Activated CD8-positive, alpha-beta T cell treated with anti-CD3 and anti-CD28 coated beads for 36 hours (primary cell): ENCODE measurements at regions of chr17 and their contacts with region 1.

Region 1: GRCh38 chr17:17849845-17850373 is 13.1 kb upstream of the SREBF1 start:
- DNase-seq: peak; percentile 96
- ATAC-seq: peak; percentile 73
- H3K4me3 Mint-ChIP-seq: peak overlapping the region; percentile 44
- H3K27ac Mint-ChIP-seq: peak overlapping the region; percentile 98
- H3K4me1 Mint-ChIP-seq: peaks cover 76% of the 10 kb centered on the region
- H3K27me3 Mint-ChIP-seq: no peaks in the 10 kb centered on the region
- CTCF ChIP-seq: peak; percentile 7

Region 2: DNA sequence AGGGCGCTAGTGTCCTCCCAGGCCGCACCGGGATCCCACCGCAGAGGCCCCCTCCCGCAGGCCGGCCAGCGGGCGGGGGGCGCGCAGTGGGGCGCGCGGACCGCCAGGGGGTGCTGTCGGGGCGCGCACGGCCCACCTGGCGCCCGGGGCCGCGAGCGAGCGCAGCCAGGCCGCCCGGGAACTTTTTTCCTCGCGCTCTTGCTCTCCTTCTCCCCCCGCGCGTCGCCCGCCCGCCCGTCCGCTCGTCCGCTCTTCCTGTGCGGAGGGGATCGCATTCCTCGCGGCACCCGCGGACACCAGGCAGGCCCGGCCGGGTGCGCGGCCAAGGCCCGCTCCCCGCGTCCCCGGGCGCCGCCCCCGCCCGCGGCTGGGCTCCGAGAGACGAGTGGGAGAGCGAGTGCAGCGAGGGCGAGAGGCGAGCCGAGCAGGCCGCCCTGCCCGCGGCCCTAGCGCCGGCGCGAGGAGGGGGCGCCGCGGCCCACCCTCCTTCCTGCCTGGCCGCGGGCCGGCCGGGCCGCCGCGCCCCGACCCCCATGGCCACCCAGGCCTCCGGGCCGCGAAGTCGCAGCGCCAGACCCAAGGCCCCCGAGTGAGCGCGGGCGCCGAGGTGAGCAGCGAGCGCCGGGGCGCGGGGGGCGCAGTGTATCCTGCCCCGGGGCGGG is 168.6 kb before region 1 on chr17 and contains the start of gene RAI1:
- CTCF ChIA-PET with region 1: interaction called, 12 read pairs
- POLR2A ChIA-PET with region 1: interaction called, 14 read pairs
- intact Hi-C with region 1: loop called (anchors 5 kb)
- DNase-seq: peak; percentile 73
- ATAC-seq: peak; percentile 65
- H3K4me3 Mint-ChIP-seq: peak within 1 kb of the TSS; percentile 80
- H3K27ac Mint-ChIP-seq: peak within 1 kb of the TSS; percentile 91
- H3K4me1 Mint-ChIP-seq: peaks cover 37% of the 10 kb centered on the region
- H3K27me3 Mint-ChIP-seq: no peaks in the 10 kb centered on the region
- CTCF ChIP-seq: peak; percentile 60
- total RNA-seq, gene RAI1: 18.1 to 20.3 TPM

Region 3: GRCh38 chr17:17729620-17730249 is 120.2 kb before region 1 on chr17:
- CTCF ChIA-PET with region 1: no interaction called
- POLR2A ChIA-PET with region 1: no interaction called
- intact Hi-C with region 1: no loop called
- DNase-seq: peak; percentile 74
- ATAC-seq: peak; percentile 92
- H3K4me3 Mint-ChIP-seq: no peak overlapping the region
- H3K27ac Mint-ChIP-seq: no peak overlapping the region
- H3K4me1 Mint-ChIP-seq: peaks cover 27% of the 10 kb centered on the region
- H3K27me3 Mint-ChIP-seq: no peaks in the 10 kb centered on the region
- CTCF ChIP-seq: peak; percentile 70

Region 4: GRCh38 chr17:17812211-17813057 is 37.5 kb before region 1 on chr17:
- CTCF ChIA-PET with region 1: interaction called, 83 read pairs
- POLR2A ChIA-PET with region 1: interaction called, 13 read pairs
- intact Hi-C with region 1: loop called (anchors 5 kb)
- DNase-seq: peak; percentile 74
- ATAC-seq: peak; percentile 59
- H3K4me3 Mint-ChIP-seq: no peak overlapping the region
- H3K27ac Mint-ChIP-seq: peak overlapping the region; percentile 75
- H3K4me1 Mint-ChIP-seq: peaks cover 22% of the 10 kb centered on the region
- H3K27me3 Mint-ChIP-seq: no peaks in the 10 kb centered on the region
- CTCF ChIP-seq: peak; percentile 99

Region 5: GRCh38 chr17:17823433-17824118 is 26.3 kb before region 1 on chr17:
- CTCF ChIA-PET with region 1: interaction called, 11 read pairs
- POLR2A ChIA-PET with region 1: interaction called, 617 read pairs
- intact Hi-C with region 1: loop called (anchors 5 kb)
- DNase-seq: peak; percentile 86
- ATAC-seq: peak; percentile 77
- H3K4me3 Mint-ChIP-seq: peak overlapping the region; percentile 75
- H3K27ac Mint-ChIP-seq: peak overlapping the region; percentile 97
- H3K4me1 Mint-ChIP-seq: peaks cover 95% of the 10 kb centered on the region
- H3K27me3 Mint-ChIP-seq: no peaks in the 10 kb centered on the region
- CTCF ChIP-seq: no peak

Region 6: DNA sequence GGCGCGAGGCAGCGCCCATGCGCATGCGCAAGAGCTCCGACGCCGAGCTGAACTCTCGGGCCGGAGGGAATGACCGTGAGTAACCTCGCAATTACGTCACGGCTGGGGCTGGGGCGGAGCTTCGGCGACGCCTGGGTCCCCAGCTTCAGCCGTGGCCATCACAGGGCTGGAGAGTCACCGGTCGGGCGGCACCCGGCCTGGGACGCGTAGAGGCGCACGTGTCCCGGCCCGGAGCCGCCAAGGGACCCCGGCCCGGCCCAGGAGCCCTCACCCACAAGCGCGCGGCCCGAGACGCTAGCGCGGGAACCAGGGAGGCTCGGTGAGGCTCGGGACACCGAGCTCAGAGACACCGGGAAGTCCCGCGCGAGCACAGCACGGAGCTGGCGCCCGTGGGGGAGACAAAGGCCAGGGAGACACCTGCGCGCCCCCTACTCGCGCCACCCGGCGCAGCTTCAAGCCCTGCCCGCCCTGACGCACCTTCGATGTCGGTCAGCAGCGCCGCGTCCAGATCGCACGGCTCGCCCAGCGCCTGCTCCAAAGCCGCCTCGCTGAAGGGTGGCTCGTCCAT is 13.6 kb before region 1 on chr17:
- CTCF ChIA-PET with region 1: interaction called, 49 read pairs
- POLR2A ChIA-PET with region 1: interaction called, 617 read pairs
- intact Hi-C with region 1: no loop called
- DNase-seq: peak; percentile 98
- ATAC-seq: peak; percentile 72
- H3K4me3 Mint-ChIP-seq: peak overlapping the region; percentile 92
- H3K27ac Mint-ChIP-seq: peak overlapping the region; percentile 96
- H3K4me1 Mint-ChIP-seq: peaks cover 69% of the 10 kb centered on the region
- H3K27me3 Mint-ChIP-seq: no peaks in the 10 kb centered on the region
- CTCF ChIP-seq: no peak

Region 7: DNA sequence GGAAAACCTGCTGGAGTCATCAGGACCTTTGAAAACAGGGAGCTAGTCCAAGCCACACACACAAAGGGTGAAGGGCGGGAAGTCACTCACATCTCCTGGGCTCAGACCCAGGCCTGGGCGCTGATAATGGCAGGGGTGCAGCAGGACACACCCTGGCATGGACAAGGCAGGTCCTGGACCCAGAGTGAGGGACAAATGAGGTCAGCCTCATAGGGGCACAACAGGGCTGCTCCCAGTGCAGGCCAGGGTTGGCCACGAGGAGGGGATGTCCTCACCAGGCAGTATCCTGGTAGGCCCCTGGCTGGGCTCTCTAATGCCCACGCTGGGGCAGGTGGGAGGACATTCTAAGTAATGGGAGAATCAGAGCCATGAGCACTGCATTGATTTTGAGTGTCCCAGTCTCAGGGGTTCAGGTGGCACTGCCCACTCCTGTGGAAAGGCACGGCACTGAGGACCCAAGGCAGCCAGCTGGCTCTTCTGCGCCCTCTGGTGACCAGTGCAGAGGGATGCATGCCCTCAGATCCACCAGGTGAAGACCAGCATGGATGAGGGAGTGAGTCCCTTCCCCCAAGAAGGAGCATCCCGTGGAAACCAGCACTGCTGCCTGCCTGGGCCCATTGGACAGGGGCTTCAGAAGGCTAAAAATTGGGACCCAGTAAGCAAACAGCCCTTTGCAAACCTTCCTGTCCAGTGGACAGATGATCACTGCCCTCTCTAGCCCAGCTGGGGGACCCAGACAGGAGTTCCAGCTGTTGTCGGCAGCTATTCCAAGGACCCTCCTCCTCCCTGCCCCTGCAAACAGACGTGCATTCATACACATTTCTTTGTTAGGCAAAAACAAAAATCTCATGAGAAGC is 10.2 kb after region 1 on chr17:
- CTCF ChIA-PET with region 1: interaction called, 4 read pairs
- POLR2A ChIA-PET with region 1: interaction called, 15 read pairs
- intact Hi-C with region 1: no loop called
- DNase-seq: peak; percentile 74
- ATAC-seq: peak; percentile 91
- H3K4me3 Mint-ChIP-seq: no peak overlapping the region
- H3K27ac Mint-ChIP-seq: no peak overlapping the region
- H3K4me1 Mint-ChIP-seq: peaks cover 30% of the 10 kb centered on the region
- H3K27me3 Mint-ChIP-seq: no peaks in the 10 kb centered on the region
- CTCF ChIP-seq: peak; percentile 97